ENCODE measurements at regions of chr19 and their contacts with region 1.

Region 1: GRCh38 chr19:44207126-44207803 is 5.1 kb upstream of the ZNF227 start:
- DNase-seq: peak; percentile 82 to 91 (median 88)
- H3K4me3 ChIP-seq: peak overlapping the region; percentile 77 to 97 (median 96)
- H3K4me3 Mint-ChIP-seq: peak overlapping the region; percentile 92 to 98
- H3K27ac ChIP-seq: peak overlapping the region; percentile 49 to 79
- H3K27ac Mint-ChIP-seq: peak overlapping the region; percentile 72 to 95 (median 89)
- H3K4me1 ChIP-seq: peaks cover 8 to 10% of the 10 kb centered on the region in 2 donors
- H3K4me1 Mint-ChIP-seq: peaks cover 10% of the 10 kb centered on the region
- H3K27me3 ChIP-seq: peaks cover 0 to 7% of the 10 kb centered on the region in 2 donors
- H3K27me3 Mint-ChIP-seq: peaks cover 2 to 12% (median 9%) of the 10 kb centered on the region in 3 donors
- CTCF ChIP-seq: no peak

Region 2: GRCh38 chr19:44010468-44010867 is 196.8 kb before region 1 on chr19:
- intact Hi-C with region 1: no loop called
- DNase-seq: no peak
- H3K4me3 ChIP-seq: peak overlapping the region in 1 of 3 experiments; percentile 55
- H3K4me3 Mint-ChIP-seq: no peak overlapping the region
- H3K27ac ChIP-seq: no peak overlapping the region
- H3K27ac Mint-ChIP-seq: no peak overlapping the region
- H3K4me1 ChIP-seq: peaks cover 9 to 11% of the 10 kb centered on the region in 2 donors
- H3K4me1 Mint-ChIP-seq: peaks cover 15% of the 10 kb centered on the region
- H3K27me3 ChIP-seq: no peaks in the 10 kb centered on the region
- H3K27me3 Mint-ChIP-seq: peaks cover 0 to 2% (median 0%) of the 10 kb centered on the region in 3 donors
- CTCF ChIP-seq: no peak

Region 3: GRCh38 chr19:44164673-44165512 is 42.4 kb before region 1 on chr19 and contains the start of gene ZNF226:
- intact Hi-C with region 1: loop called (anchors 5 kb)
- DNase-seq: peak; percentile 89 to 96 (median 95)
- H3K4me3 ChIP-seq: peak within 1 kb of the TSS; percentile 66 to 91 (median 68)
- H3K4me3 Mint-ChIP-seq: peak within 1 kb of the TSS; percentile 98 to 99
- H3K27ac ChIP-seq: peak within 1 kb of the TSS; percentile 58 to 86
- H3K27ac Mint-ChIP-seq: peak within 1 kb of the TSS; percentile 88 to 97 (median 96)
- H3K4me1 ChIP-seq: peaks cover 11 to 16% of the 10 kb centered on the region in 2 donors
- H3K4me1 Mint-ChIP-seq: peaks cover 18% of the 10 kb centered on the region
- H3K27me3 ChIP-seq: no peaks in the 10 kb centered on the region
- H3K27me3 Mint-ChIP-seq: peaks cover 1 to 10% (median 7%) of the 10 kb centered on the region in 3 donors
- CTCF ChIP-seq: no peak
- polyA plus RNA-seq, gene ZNF226: 9.3 to 16.6 (median 16.3) TPM

Measured in CD14-positive monocyte (primary cell).